CD14-positive monocyte (primary cell): ENCODE measurements at regions of chr21 and their contacts with region 1.

Region 1: DNA sequence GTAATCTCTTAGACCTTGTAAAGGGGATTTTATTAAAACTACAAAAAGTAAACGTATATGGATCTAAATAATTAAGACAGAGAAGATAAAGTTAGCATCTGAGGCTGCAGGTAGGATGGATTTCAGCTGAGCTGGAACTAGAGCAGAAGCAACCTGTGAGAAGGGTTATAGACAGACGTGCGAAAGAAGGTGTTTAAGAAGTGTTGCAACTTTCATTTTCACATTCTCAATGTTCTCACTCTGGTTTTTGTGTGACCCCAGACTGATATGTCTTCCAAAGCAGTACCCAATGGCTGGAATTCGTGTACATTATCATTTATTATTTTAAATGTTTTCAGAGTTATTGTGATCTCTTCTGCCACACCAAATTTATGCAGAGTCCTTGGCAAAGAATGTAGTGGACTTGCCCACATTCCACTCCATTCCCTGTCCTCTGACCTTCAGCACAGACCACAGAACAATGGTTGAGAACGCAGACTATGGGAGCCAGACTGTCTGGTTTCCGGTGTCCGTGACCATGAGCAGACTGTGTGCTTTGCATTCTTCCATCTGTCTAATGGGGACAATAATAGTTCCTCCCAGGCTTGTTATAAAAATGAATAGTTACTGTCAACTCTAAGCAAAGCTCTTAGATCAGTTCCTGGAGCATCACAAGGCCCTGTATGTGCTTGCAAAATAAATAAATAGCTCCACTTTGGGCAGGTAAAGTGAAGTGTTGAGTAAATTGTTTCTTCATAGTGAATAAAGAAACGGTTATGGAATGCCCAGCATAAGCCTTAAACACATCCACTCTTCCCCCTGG is 140.6 kb upstream of the SAMSN1 start:
- DNase-seq: peak; percentile 25 to 58 (median 30)
- H3K4me3 ChIP-seq: peak overlapping the region in 1 of 3 experiments; percentile 43
- H3K4me3 Mint-ChIP-seq: peak overlapping the region in 1 of 2 donors; percentile 43
- H3K27ac ChIP-seq: peak overlapping the region; percentile 80 to 91
- H3K27ac Mint-ChIP-seq: peak overlapping the region; percentile 86 to 95 (median 92)
- H3K4me1 ChIP-seq: peaks cover 73 to 83% of the 10 kb centered on the region in 2 donors
- H3K4me1 Mint-ChIP-seq: peaks cover 77% of the 10 kb centered on the region
- H3K27me3 ChIP-seq: no peaks in the 10 kb centered on the region
- H3K27me3 Mint-ChIP-seq: no peaks in the 10 kb centered on the region
- CTCF ChIP-seq: no peak

Region 2: DNA sequence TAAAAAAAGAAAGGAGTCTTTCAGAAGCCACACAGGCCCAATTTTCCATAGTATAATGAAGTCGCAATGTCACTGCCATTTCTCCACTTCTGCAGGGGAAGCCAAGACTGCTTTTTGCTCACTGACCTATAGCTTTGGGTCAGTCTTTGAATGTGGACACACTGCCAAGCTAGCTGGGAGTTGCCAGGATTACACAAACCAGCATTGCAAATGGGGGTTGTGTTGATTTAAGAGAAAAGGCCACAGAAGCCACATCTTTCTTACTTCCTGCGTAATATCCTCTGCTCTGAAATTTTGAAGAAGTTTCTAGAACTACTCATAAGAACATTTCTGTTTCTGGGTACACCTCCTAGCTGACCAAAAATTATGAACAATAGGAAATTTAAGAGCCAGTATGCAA is 94.8 kb before region 1 on chr21:
- intact Hi-C with region 1: loop called in 1 of 2 experiments (anchors 5 kb)
- DNase-seq: peak; percentile 93 to 99 (median 96)
- H3K4me3 ChIP-seq: peak overlapping the region in 1 of 3 experiments; percentile 12
- H3K4me3 Mint-ChIP-seq: peak overlapping the region in 1 of 2 donors; percentile 22
- H3K27ac ChIP-seq: peak overlapping the region; percentile 47 to 88
- H3K27ac Mint-ChIP-seq: peak overlapping the region; percentile 91 to 99 (median 97)
- H3K4me1 ChIP-seq: peaks cover 28 to 44% of the 10 kb centered on the region in 2 donors
- H3K4me1 Mint-ChIP-seq: peaks cover 38% of the 10 kb centered on the region
- H3K27me3 ChIP-seq: no peaks in the 10 kb centered on the region
- H3K27me3 Mint-ChIP-seq: no peaks in the 10 kb centered on the region
- CTCF ChIP-seq: no peak